Ovary (tissue), 10 donors: ENCODE measurements at regions of chr4 and their contacts with region 1.

Region 1: GRCh38 chr4:43875655-43876054 is 573.0 kb downstream of the KCTD8 start:
- DNase-seq: no peak
- H3K4me3 ChIP-seq: no peak overlapping the region
- H3K27ac ChIP-seq: no peak overlapping the region
- H3K4me1 ChIP-seq: no peaks in the 10 kb centered on the region
- H3K27me3 ChIP-seq: no peaks in the 10 kb centered on the region
- CTCF ChIP-seq: no peak
- EP300 ChIP-seq: no peak
- POLR2A ChIP-seq: no peak

Region 2: DNA sequence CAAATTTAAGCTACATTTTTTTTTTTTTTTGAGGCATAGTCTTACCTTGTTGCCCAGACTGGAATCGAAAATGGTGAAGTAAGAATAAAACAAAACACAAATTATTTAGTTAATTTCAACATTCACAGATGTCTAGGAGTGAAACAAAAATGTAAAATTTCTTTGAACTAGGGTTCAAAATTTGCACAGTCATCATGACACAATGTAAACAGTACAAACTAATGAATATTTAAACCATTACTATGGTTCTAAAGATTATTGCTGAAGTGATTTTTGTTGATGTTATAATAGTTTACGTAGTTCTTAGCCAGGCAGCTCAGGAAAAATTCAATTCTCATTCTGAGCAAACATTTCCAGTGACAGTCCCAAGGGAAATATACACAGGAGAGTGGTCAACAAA is 350.0 kb before region 1 on chr4:
- intact Hi-C with region 1: loop called in 1 of 4 experiments (anchors 10 kb)
- DNase-seq: no peak
- H3K4me3 ChIP-seq: no peak overlapping the region
- H3K27ac ChIP-seq: no peak overlapping the region
- H3K4me1 ChIP-seq: no peaks in the 10 kb centered on the region
- H3K27me3 ChIP-seq: no peaks in the 10 kb centered on the region
- CTCF ChIP-seq: no peak
- EP300 ChIP-seq: no peak
- POLR2A ChIP-seq: no peak